PC-3 (cell line): ENCODE measurements at regions of chr1 and their contacts with region 1.

Region 1: DNA sequence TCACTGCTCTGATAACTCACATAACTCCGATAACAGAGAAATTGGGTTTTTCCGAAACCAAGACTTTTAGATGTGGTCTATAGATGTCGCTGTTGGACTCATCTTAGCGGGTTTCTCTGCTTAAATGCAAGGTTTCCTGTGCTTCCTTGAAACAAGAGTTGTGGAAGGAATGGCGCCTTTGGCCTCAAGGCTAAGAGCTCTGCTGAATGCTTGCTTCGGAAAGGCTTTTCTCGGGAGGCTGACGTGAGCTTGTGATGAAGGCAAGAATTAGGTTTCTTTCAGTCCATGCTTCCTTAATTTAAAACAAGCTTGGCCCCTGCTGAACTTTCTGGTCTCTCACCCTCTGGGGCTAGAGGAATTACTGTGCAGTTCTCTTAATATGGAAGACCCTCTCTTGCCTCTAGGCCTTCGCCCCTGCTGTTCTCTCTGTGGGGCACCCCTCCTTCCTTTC is 113.5 kb downstream of the MAP3K21 start:
- DNase-seq: peak; percentile 96
- ATAC-seq: peak; percentile 41
- H3K4me3 ChIP-seq: no peak overlapping the region
- H3K27ac ChIP-seq: no peak overlapping the region
- H3K4me1 ChIP-seq: peaks cover 30% of the 10 kb centered on the region
- H3K27me3 ChIP-seq: no peaks in the 10 kb centered on the region
- CTCF ChIP-seq: peak; percentile 93

Region 2: DNA sequence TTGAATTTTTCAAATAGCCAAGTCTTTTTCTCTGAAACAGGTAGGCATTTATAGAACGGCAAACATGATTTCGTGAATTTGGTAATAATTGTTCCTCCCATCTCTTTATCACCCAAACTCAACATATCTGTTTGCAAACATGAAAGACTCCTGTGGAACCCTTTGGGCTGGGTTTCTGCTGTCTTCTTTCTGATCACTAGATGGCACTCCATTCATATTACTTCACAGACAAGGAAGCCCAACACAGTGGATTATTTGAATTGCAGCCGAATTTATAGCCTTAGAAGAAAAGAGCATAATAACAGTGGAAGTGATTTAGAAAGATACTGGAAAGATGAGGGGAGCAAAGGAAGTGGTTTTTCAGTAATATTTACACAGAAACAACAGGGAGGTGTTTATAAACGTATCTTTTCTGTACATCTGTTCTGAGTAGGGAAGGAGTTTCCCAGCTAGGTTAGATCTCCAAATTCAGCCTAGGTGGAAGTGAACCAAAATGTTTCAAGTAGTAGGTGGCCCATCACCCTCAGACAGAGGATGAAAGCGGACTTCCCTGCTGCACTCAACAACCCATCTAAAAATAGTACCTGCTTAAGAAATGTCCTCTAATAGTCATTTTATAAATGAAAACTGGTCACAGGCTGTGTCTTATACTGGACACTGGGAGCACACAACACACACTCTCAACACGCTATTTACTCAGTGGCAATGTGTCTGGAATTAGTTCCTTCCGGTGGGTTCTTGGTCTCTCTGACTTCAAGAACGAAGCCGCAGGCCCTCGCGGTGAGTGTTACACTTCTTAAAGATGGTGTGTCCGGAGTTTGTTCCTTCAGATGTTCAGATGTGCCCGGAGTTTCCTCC is 45.9 kb before region 1 on chr1:
- CTCF ChIA-PET with region 1: no interaction called
- POLR2A ChIA-PET with region 1: no interaction called
- intact Hi-C with region 1: loop called (anchors 1 kb)
- DNase-seq: peak; percentile 90
- ATAC-seq: peak; percentile 97
- H3K4me3 ChIP-seq: no peak overlapping the region
- H3K27ac ChIP-seq: no peak overlapping the region
- H3K4me1 ChIP-seq: 0 out of 2 replicates have a peak, but pooled peaks cover 3% of the 10 kb centered on the region
- H3K27me3 ChIP-seq: no peaks in the 10 kb centered on the region
- CTCF ChIP-seq: peak; percentile 98

Region 3: GRCh38 chr1:233406994-233407631 is 33.9 kb before region 1 on chr1:
- CTCF ChIA-PET with region 1: no interaction called
- POLR2A ChIA-PET with region 1: no interaction called
- intact Hi-C with region 1: no loop called
- DNase-seq: no peak
- ATAC-seq: no peak
- H3K4me3 ChIP-seq: no peak overlapping the region
- H3K27ac ChIP-seq: no peak overlapping the region
- H3K4me1 ChIP-seq: no peaks in the 10 kb centered on the region
- H3K27me3 ChIP-seq: no peaks in the 10 kb centered on the region
- CTCF ChIP-seq: no peak

Region 4: GRCh38 chr1:233424779-233425178 is 16.2 kb before region 1 on chr1:
- CTCF ChIA-PET with region 1: no interaction called
- POLR2A ChIA-PET with region 1: no interaction called
- intact Hi-C with region 1: no loop called
- DNase-seq: peak; percentile 44
- ATAC-seq: peak; percentile 79
- H3K4me3 ChIP-seq: peak overlapping the region; percentile 37; the same call in 1 of the 2 replicates
- H3K27ac ChIP-seq: no peak overlapping the region
- H3K4me1 ChIP-seq: no peaks in the 10 kb centered on the region
- H3K27me3 ChIP-seq: no peaks in the 10 kb centered on the region
- CTCF ChIP-seq: peak; percentile 62

Region 5: DNA sequence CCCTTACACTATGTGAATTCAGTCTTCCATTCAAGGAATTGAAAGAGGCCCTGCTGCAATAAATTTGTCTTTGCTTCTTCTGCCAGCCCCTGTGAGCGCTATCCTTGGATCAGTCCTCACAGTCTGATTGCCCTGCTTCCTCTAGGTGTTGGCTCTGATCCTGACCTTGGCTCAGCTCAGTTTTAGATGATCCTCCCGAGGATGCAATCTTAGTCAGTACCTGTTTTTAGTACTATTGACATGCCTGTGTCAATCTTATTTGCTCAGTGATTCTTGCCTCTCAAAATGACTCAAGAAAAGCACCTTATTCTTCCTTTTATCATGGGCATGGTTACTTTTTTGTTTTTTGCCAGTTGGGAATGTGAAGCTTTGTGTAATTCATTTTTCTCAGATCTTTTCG is 71.6 kb after region 1 on chr1:
- CTCF ChIA-PET with region 1: interaction called, 4 read pairs
- POLR2A ChIA-PET with region 1: no interaction called
- intact Hi-C with region 1: loop called (anchors 2 kb)
- DNase-seq: peak; percentile 77
- ATAC-seq: peak; percentile 76
- H3K4me3 ChIP-seq: no peak overlapping the region
- H3K27ac ChIP-seq: no peak overlapping the region
- H3K4me1 ChIP-seq: peaks cover 22% of the 10 kb centered on the region
- H3K27me3 ChIP-seq: no peaks in the 10 kb centered on the region
- CTCF ChIP-seq: no peak

Region 6: DNA sequence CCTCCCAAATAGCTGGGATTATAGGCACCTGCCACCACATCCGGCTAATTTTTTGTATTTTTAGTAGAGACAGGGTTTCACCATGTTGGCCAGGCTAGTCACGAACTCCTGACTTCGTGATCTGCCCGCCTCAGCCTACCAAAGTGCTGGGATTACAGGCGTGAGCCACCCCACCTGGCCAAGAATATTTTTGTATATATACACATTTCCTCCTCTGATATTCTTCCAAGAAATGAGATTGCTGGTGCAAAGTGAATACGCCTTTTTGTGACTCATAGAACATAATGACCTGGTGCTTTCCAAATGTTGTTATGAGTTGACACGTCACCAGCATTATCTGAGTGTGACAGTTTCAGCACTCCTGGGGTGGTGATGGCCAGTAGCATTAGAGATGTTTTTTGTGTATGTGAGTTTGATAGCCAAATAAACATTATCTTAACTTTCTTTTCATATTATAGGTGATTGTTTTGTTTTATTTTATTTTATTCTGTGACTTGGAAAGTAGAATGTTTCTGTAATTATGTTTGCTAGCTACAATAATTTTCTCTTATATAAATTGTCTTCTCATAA is 227.8 kb after region 1 on chr1:
- CTCF ChIA-PET with region 1: no interaction called
- POLR2A ChIA-PET with region 1: no interaction called
- intact Hi-C with region 1: loop called (anchors 1 kb)
- DNase-seq: peak; percentile 94
- ATAC-seq: peak; percentile 95
- H3K4me3 ChIP-seq: no peak overlapping the region
- H3K27ac ChIP-seq: peak overlapping the region; percentile 51
- H3K4me1 ChIP-seq: peaks cover 13% of the 10 kb centered on the region
- H3K27me3 ChIP-seq: no peaks in the 10 kb centered on the region
- CTCF ChIP-seq: no peak

Region 7: DNA sequence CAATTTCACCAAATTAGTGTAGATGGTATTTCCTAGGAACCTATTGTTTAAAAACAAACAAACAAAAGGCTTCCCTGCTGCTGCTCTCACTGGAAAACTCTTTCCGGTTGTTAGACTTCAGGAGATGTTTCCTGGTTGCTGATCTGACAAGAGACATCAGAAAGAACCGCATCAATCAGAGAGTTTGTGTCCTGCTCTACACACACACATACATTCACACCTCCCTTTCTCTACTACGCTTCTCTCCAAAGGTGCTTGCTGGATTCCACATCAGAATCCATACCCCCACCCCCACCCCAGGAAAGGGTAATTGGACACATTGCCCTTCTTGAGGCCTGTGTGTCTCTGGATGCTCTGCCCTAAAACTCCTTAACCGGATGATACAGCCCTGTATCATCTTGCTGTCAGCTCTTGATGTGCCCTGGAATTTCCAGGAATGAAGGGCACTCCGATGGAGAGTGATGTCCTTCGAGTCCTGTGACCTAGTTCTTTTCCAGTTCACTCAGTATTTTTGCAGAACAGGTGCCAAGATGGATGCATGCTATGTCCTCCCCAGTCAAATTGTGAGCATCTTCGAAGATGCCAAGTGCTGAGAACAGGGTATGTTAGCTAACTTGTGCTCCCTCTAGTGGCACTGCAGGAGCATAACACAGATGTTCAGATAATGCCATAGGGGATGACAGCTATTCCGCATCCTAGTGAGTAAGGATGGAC is 349.8 kb after region 1 on chr1:
- CTCF ChIA-PET with region 1: interaction called, 11 read pairs
- POLR2A ChIA-PET with region 1: no interaction called
- intact Hi-C with region 1: loop called (anchors 1 kb)
- DNase-seq: peak; percentile 87
- ATAC-seq: peak; percentile 87
- H3K4me3 ChIP-seq: no peak overlapping the region
- H3K27ac ChIP-seq: no peak overlapping the region
- H3K4me1 ChIP-seq: peaks cover 12% of the 10 kb centered on the region
- H3K27me3 ChIP-seq: no peaks in the 10 kb centered on the region
- CTCF ChIP-seq: peak; percentile 98

Region 8: GRCh38 chr1:233916706-233917105 is 475.7 kb after region 1 on chr1:
- CTCF ChIA-PET with region 1: no interaction called
- POLR2A ChIA-PET with region 1: no interaction called
- intact Hi-C with region 1: loop called (anchors 1 kb)
- DNase-seq: peak; percentile 97
- ATAC-seq: peak; percentile 94
- H3K4me3 ChIP-seq: peak overlapping the region; percentile 8; the same call in 1 of the 2 replicates
- H3K27ac ChIP-seq: peak overlapping the region; percentile 88
- H3K4me1 ChIP-seq: peaks cover 31% of the 10 kb centered on the region
- H3K27me3 ChIP-seq: no peaks in the 10 kb centered on the region
- CTCF ChIP-seq: peak; percentile 53; the same call in 1 of the 2 replicates

Region 9: DNA sequence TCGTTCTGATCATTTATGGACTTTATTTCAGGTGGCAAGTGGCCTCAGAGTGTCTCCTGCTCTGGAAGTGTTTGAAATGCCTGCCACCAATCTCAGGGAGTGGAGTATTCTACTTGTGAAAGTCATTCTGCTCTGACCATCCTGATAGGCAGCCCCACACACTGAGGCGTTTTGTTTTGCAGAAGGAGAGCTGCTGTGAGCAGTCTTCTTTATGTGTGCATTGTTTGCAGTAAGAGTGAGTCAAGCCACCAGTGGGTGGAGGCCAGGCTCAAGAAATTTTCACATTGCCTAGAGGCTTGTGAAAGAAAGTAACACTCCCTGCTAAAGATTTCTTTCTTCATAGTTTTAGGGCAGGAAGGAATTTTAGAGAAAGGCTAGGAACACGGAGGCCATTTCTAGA is 667.9 kb after region 1 on chr1:
- CTCF ChIA-PET with region 1: interaction called, 17 read pairs
- POLR2A ChIA-PET with region 1: no interaction called
- intact Hi-C with region 1: loop called (anchors 2 kb)
- DNase-seq: peak; percentile 93
- ATAC-seq: peak; percentile 93
- H3K4me3 ChIP-seq: no peak overlapping the region
- H3K27ac ChIP-seq: peak overlapping the region; percentile 86
- H3K4me1 ChIP-seq: peaks cover 26% of the 10 kb centered on the region
- H3K27me3 ChIP-seq: no peaks in the 10 kb centered on the region
- CTCF ChIP-seq: no peak